PC-3 (cell line): ENCODE measurements at regions of chr7 and their contacts with region 1.

Region 1: GRCh38 chr7:155003376-155004214 is 671 bp upstream of the PAXIP1 start:
- DNase-seq: peak; percentile 70
- ATAC-seq: peak; percentile 65
- H3K4me3 ChIP-seq: peak overlapping the region; percentile 86
- H3K27ac ChIP-seq: peak overlapping the region; percentile 65
- H3K4me1 ChIP-seq: peaks cover 10% of the 10 kb centered on the region
- H3K27me3 ChIP-seq: no peaks in the 10 kb centered on the region
- CTCF ChIP-seq: no peak

Region 2: GRCh38 chr7:154817224-154817896 is 186.2 kb before region 1 on chr7:
- CTCF ChIA-PET with region 1: no interaction called
- POLR2A ChIA-PET with region 1: no interaction called
- intact Hi-C with region 1: no loop called
- DNase-seq: no peak
- ATAC-seq: no peak
- H3K4me3 ChIP-seq: no peak overlapping the region
- H3K27ac ChIP-seq: no peak overlapping the region
- H3K4me1 ChIP-seq: no peaks in the 10 kb centered on the region
- H3K27me3 ChIP-seq: no peaks in the 10 kb centered on the region; the same call in 1 of the 2 replicates
- CTCF ChIP-seq: no peak

Region 3: DNA sequence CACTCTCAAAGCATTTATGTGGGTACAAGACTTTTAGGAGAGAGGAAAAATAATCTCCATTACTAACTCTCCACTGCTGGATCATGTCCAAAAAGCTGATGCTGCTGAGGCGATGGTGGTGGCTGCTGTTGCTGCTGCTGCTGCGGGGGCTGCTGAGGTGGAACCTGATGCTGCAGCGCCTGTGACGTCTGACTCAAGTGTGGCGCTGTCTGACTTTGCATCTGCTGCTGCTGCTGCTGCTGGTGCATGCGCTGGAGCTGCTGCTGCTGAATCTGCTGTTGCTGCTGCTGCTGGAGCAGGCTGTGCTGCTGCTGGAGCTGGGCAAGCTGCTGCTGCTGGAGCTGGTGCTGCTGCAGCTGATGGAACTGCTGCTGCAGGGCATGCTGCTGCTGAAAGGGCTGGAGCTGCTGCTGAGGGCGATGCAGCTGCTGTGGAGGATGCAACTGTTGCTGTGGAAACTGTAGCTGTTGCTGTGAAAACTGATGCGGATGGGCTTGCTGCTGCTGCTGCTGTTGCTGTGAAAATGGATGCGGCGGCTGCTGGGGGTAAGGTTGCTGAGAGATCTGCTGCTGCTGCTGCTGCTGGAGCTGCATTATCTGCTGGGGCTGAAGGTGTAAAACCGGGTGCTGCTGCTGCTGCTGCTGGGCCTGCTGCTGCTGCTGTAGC is 35.1 kb before region 1 on chr7:
- CTCF ChIA-PET with region 1: no interaction called
- POLR2A ChIA-PET with region 1: interaction called, 17 read pairs
- intact Hi-C with region 1: no loop called
- DNase-seq: no peak
- ATAC-seq: no peak
- H3K4me3 ChIP-seq: no peak overlapping the region
- H3K27ac ChIP-seq: no peak overlapping the region
- H3K4me1 ChIP-seq: no peaks in the 10 kb centered on the region
- H3K27me3 ChIP-seq: no peaks in the 10 kb centered on the region
- CTCF ChIP-seq: no peak

Region 4: GRCh38 chr7:155166673-155167370 is 163.2 kb after region 1 on chr7:
- CTCF ChIA-PET with region 1: no interaction called
- POLR2A ChIA-PET with region 1: no interaction called
- intact Hi-C with region 1: loop called (anchors 10 kb)
- DNase-seq: peak; percentile 68
- ATAC-seq: peak; percentile 95
- H3K4me3 ChIP-seq: no peak overlapping the region
- H3K27ac ChIP-seq: no peak overlapping the region
- H3K4me1 ChIP-seq: peaks cover 4% of the 10 kb centered on the region; the same call in 1 of the 2 replicates
- H3K27me3 ChIP-seq: peaks cover 49% of the 10 kb centered on the region
- CTCF ChIP-seq: no peak

Region 5: DNA sequence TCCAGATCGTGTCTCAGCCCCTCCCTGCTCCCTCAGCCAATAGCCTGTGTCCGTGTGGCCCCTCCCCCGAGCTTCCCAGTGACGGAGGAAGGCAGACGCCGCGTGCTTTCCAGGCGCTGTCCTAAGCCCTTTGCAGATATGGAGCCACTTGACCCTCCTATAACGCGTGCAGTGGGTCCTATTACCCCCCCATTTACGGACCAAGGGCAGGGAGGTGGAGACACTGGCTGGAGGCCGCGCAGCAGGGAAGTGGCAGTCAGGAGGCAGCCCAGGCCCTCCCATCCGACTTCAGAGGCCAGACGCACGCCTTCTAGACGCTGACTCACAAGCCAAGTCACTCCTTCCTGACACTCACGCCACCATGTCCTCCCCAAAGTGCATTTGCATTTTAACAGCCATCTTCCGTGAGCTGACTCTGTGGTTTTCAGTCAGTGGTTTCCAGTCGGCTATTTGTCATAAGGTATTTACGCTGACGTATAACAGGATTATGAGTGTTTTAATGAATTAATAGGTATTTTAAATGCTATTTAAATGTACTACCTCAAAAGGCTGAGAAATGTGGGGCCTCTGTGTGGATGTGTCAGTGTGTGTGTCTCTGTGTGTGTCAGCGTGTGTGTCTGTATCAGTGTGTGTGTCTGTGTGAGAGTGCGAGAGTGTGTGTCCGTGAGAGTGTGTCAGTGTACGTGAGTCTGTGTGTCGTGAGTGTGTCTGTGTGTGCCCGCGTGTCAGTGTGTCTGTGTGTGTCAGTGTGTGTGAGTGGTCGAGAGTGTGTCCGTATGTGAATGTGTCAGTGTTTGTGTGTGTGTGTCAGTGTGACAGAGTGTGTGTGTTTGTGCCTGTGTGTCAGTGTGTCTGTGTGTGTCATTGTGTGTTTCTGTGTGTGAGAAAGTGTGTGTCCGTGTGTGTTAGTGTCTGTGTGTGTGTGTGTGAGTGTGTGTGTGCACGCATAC is 202.0 kb after region 1 on chr7:
- CTCF ChIA-PET with region 1: no interaction called
- POLR2A ChIA-PET with region 1: no interaction called
- intact Hi-C with region 1: loop called (anchors 10 kb)
- DNase-seq: peak; percentile 94
- ATAC-seq: peak; percentile 87
- H3K4me3 ChIP-seq: peak overlapping the region; percentile 62
- H3K27ac ChIP-seq: peak overlapping the region; percentile 97
- H3K4me1 ChIP-seq: peaks cover 42% of the 10 kb centered on the region
- H3K27me3 ChIP-seq: no peaks in the 10 kb centered on the region
- CTCF ChIP-seq: no peak

Region 6: GRCh38 chr7:155344600-155345433 is 341.2 kb after region 1 on chr7:
- CTCF ChIA-PET with region 1: no interaction called
- POLR2A ChIA-PET with region 1: no interaction called
- intact Hi-C with region 1: loop called (anchors 5 kb)
- DNase-seq: peak; percentile 72
- ATAC-seq: peak; percentile 95
- H3K4me3 ChIP-seq: peak overlapping the region; percentile 64
- H3K27ac ChIP-seq: no peak overlapping the region
- H3K4me1 ChIP-seq: no peaks in the 10 kb centered on the region; the same call in 1 of the 2 replicates
- H3K27me3 ChIP-seq: peaks cover 12% of the 10 kb centered on the region; the same call in 1 of the 2 replicates
- CTCF ChIP-seq: peak; percentile 73